Naive thymus-derived CD8-positive, alpha-beta T cell (primary cell): ENCODE measurements at regions of chr7 and their contacts with region 1.

Region 1: DNA sequence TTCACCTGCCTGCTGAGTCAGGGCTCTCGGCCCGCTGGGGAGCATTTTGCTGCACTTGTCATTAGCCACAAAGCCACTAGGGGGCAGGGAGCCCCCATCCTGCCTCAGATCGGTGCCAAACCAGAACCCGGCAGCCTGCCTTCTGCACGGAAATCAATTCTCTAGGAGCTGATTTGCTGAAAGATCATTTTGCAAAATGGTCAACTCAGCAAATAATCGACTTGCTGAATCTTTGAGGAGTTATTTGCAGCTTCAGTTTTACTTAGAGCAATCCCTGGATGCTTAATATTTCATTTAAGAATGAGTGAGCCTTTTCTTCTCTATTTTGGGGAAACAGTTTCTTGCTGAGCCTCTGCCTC is 1.7 kb upstream of the GIMAP8 start:
- DNase-seq: peak; percentile 71 to 93 (median 86)
- ATAC-seq: peak; percentile 22 to 44
- H3K4me3 Mint-ChIP-seq: peak overlapping the region; percentile 95 to 100 (median 99)
- H3K27ac Mint-ChIP-seq: peak overlapping the region; percentile 91 to 99 (median 97)
- H3K4me1 Mint-ChIP-seq: peaks cover 42 to 67% (median 52%) of the 10 kb centered on the region in 4 donors
- H3K27me3 Mint-ChIP-seq: no peaks in the 10 kb centered on the region

Region 2: DNA sequence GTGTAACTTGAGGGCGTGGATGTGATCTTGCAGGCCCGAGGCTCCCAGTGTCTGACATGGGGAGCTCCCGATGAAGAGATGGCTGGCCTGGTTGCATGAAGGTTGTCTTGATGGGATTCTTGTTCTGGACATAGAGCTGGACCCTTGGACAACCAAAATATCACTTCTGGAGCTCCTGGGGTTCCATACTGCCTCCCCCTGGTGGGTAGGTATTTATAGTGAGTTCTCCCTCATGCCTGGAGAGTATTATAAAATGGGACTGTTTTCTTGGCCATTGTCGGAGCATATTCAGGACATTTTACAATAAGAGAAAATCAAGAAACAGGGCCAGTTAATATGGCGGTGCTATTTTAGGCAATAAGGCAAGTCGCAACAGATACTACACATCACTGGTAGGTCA is 30.9 kb before region 1 on chr7:
- POLR2A ChIA-PET with region 1: no interaction called
- DNase-seq: peak in 1 of 10 donors; percentile 6
- ATAC-seq: no peak
- H3K4me3 Mint-ChIP-seq: no peak overlapping the region
- H3K27ac Mint-ChIP-seq: no peak overlapping the region
- H3K4me1 Mint-ChIP-seq: peaks cover 7 to 13% (median 8%) of the 10 kb centered on the region in 4 donors
- H3K27me3 Mint-ChIP-seq: peaks cover 0 to 1% (median 0%) of the 10 kb centered on the region in 5 donors

Region 3: GRCh38 chr7:150466477-150466876 is 17.7 kb after region 1 on chr7:
- POLR2A ChIA-PET with region 1: interaction called, 198 read pairs
- DNase-seq: no peak
- ATAC-seq: no peak
- H3K4me3 Mint-ChIP-seq: peak overlapping the region in 4 of 10 donors; percentile 36 to 76 (median 50)
- H3K27ac Mint-ChIP-seq: peak overlapping the region in 9 of 10 donors; percentile 17 to 95 (median 61)
- H3K4me1 Mint-ChIP-seq: peaks cover 45 to 91% (median 87%) of the 10 kb centered on the region in 4 donors
- H3K27me3 Mint-ChIP-seq: no peaks in the 10 kb centered on the region

Region 4: DNA sequence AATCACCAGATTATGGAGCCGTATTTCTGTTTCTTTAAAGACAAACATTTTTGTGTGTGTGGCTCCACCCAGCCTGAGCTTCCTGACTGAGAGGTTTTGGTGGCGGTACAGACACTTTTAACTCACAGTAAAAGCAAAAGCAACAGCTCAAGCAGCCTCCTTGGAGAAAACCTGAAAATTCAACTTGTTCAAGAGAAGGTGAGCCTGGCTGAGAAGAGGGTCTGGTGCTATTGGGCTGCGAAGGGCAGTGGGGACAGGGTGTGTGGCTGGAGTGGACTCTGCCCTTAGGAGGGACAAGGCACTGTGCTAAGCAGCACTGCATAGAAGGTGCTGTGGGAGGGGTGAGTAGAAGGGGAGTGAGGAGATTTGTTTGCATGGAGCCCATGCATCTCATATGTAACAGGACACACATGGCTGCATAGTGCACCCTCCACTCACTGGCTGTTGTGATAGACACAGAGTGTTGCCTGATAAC is 66.0 kb after region 1 on chr7 and contains the start of gene GIMAP7:
- POLR2A ChIA-PET with region 1: interaction called, 812 read pairs
- DNase-seq: peak; percentile 29 to 87 (median 71)
- ATAC-seq: peak; percentile 72 to 85
- H3K4me3 Mint-ChIP-seq: peak within 1 kb of the TSS; percentile 96 to 100 (median 99)
- H3K27ac Mint-ChIP-seq: peak within 1 kb of the TSS; percentile 94 to 99 (median 98)
- H3K4me1 Mint-ChIP-seq: peaks cover 25 to 50% (median 48%) of the 10 kb centered on the region in 4 donors
- H3K27me3 Mint-ChIP-seq: no peaks in the 10 kb centered on the region
- polyA plus RNA-seq, gene GIMAP7: 451 to 821 (median 658) TPM

Region 5: DNA sequence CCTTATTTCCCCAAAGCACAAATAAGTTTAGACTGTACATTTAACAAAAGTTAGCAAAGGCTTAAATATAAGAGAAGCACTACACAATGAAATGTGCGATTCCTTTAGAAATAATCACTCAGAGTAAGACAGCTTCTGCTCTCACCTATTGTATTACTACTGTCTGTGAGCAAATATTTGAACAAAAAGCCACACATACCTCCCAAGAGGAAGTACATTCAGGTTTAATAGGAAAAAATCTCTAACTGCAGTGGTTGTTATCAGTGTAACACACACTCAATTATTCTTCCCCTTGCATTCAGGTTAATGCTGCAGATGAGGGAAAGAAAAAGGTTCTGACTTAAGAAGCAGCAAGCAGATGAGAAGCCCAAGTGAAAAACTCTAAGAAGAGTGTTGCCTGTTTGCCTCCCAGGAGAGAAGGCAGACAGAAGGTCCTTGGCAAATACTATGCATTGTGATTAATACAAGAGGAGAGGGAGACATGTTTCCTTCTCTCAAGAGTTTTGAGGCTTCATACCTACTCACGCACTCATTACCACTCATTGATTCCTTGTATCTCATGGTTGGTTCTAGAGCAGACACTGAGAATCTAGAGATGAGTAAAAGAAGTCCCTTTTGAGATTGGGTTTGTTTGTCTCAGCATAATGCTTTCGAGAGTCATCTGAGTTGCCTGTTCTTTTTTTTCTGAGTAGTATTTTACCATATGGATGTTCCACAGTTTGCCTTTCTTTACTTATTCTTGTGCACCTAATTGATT is 132.0 kb after region 1 on chr7:
- POLR2A ChIA-PET with region 1: interaction called, 20 read pairs
- DNase-seq: no peak
- ATAC-seq: no peak
- H3K4me3 Mint-ChIP-seq: peak overlapping the region in 1 of 10 donors; percentile 38
- H3K27ac Mint-ChIP-seq: peak overlapping the region in 7 of 10 donors; percentile 7 to 85 (median 76)
- H3K4me1 Mint-ChIP-seq: peaks cover 15 to 64% (median 44%) of the 10 kb centered on the region in 4 donors
- H3K27me3 Mint-ChIP-seq: no peaks in the 10 kb centered on the region

Region 6: DNA sequence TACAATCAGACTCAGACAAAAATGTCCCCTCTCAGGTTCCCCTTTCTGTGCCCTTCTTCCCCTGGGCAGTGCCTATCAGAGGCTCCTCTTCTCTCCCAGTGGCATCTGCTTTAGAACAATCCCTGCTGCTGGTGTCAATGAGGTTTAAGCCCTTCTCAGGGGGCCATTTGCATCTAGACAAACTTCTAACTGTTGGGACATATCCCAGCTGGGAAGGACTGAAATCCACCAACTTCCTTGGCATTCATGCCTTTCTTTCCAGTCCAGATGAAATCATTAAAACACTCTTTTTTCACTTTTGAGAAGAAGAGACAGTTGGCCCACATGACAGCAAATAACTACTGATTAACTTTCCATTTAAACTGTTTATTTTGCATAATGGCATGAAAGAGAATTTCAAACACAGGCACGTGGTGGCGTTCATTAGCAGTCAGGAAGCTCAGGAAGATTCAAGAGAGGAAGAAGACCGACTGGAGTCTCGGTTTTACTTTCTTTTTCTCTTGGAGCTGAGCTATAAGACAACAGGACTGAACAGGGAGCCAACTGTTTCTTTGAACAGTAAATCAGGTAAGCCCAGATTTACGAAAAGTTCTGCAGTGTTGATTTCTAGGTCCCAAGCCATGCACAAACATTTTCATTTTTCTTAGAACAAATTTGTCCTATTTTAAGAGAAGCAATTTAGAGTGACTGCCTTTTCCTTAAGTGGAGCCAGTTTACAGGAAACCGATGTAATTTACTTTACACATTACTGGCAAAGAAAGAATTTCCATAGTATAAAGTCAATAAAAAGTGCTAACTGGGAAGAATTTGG is 236.7 kb after region 1 on chr7 and contains the start of gene GIMAP2:
- POLR2A ChIA-PET with region 1: interaction called, 36 read pairs
- DNase-seq: peak in 5 of 10 donors; percentile 7 to 68 (median 58)
- ATAC-seq: peak; percentile 71 to 89
- H3K4me3 Mint-ChIP-seq: peak within 1 kb of the TSS; percentile 94 to 100 (median 97)
- H3K27ac Mint-ChIP-seq: peak within 1 kb of the TSS; percentile 95 to 100 (median 98)
- H3K4me1 Mint-ChIP-seq: peaks cover 46 to 93% (median 80%) of the 10 kb centered on the region in 4 donors
- H3K27me3 Mint-ChIP-seq: no peaks in the 10 kb centered on the region
- polyA plus RNA-seq, gene GIMAP2: 89.3 to 102 (median 93.8) TPM

Region 7: GRCh38 chr7:150753826-150754603 is 305.2 kb after region 1 on chr7:
- POLR2A ChIA-PET with region 1: interaction called, 245 read pairs
- DNase-seq: peak in 1 of 10 donors; percentile 60
- ATAC-seq: peak in 1 of 2 donors; percentile 10
- H3K4me3 Mint-ChIP-seq: peak overlapping the region in 9 of 10 donors; percentile 36 to 78 (median 63)
- H3K27ac Mint-ChIP-seq: peak overlapping the region; percentile 66 to 97 (median 94)
- H3K4me1 Mint-ChIP-seq: peaks cover 35 to 77% (median 71%) of the 10 kb centered on the region in 4 donors
- H3K27me3 Mint-ChIP-seq: peaks cover 0 to 2% (median 0%) of the 10 kb centered on the region in 5 donors